K562 (cell line): ENCODE measurements at regions of chr7 and their contacts with region 1.

Region 1: DNA sequence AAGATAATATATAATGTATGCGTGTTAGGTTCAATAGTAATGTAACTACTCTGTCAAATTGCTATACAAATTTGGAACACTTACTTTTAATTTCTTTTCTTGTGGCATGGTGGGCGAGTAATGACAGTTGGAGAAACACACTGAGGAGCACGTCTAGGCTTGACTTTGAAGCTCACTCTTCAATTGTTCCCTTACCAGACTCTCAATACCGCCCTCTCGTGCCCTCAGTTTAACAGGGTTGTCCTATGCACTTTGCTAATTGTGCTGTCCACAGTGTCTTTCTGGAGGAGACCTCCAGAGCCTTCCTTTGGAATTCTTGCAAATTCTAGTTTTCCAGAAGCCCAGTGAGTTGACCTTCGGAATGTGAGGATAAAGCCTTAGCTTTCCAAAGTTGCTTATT is 107.2 kb upstream of the RELN start:
- DNase-seq: peak in 3 of 4 experiments; percentile 41 to 86 (median 72)
- ATAC-seq: peak; percentile 93
- H3K4me3 ChIP-seq: no peak overlapping the region
- H3K27ac ChIP-seq: no peak overlapping the region
- H3K4me1 ChIP-seq: peaks cover 5 to 17% of the 10 kb centered on the region in 2 experiments; a peak in 4 of 5 replicates
- H3K27me3 ChIP-seq: no peaks in the 10 kb centered on the region
- CTCF ChIP-seq: peak; percentile 74 to 76 (median 75)
- EP300 ChIP-seq: no peak
- POLR2A ChIP-seq: no peak
- RAD21 ChIP-seq: peak; percentile 81 to 87

Region 2: GRCh38 chr7:103524042-103524907 is 572.4 kb before region 1 on chr7:
- CTCF ChIA-PET with region 1: interaction called, 3 read pairs
- POLR2A ChIA-PET with region 1: no interaction called
- in situ Hi-C with region 1: no loop called
- intact Hi-C with region 1: loop called (anchors 1 kb)
- DNase-seq: peak; percentile 29 to 67 (median 46)
- ATAC-seq: peak; percentile 93
- H3K4me3 ChIP-seq: no peak overlapping the region
- H3K27ac ChIP-seq: no peak overlapping the region
- H3K4me1 ChIP-seq: peaks cover 0 to 3% of the 10 kb centered on the region in 2 experiments; a peak in 2 of 5 replicates
- H3K27me3 ChIP-seq: no peaks in the 10 kb centered on the region; a peak in 1 of 5 replicates
- CTCF ChIP-seq: peak; percentile 69 to 84 (median 74)
- EP300 ChIP-seq: no peak
- POLR2A ChIP-seq: no peak
- RAD21 ChIP-seq: peak; percentile 95 to 96

Region 3: GRCh38 chr7:103660455-103661371 is 436.0 kb before region 1 on chr7:
- CTCF ChIA-PET with region 1: no interaction called
- POLR2A ChIA-PET with region 1: no interaction called
- in situ Hi-C with region 1: no loop called
- intact Hi-C with region 1: loop called (anchors 10 kb)
- DNase-seq: peak in 2 of 4 experiments; percentile 32 to 72
- ATAC-seq: peak; percentile 57
- H3K4me3 ChIP-seq: no peak overlapping the region
- H3K27ac ChIP-seq: peak overlapping the region; percentile 71
- H3K4me1 ChIP-seq: peaks cover 10 to 53% of the 10 kb centered on the region in 2 experiments
- H3K27me3 ChIP-seq: no peaks in the 10 kb centered on the region
- CTCF ChIP-seq: no peak
- EP300 ChIP-seq: peak; percentile 82
- POLR2A ChIP-seq: no peak
- RAD21 ChIP-seq: 0 out of 4 replicates have a peak, but pooled peaks of 1 of the 2 experiments have one; percentile 2

Region 4: GRCh38 chr7:103887855-103888602 is 208.7 kb before region 1 on chr7:
- CTCF ChIA-PET with region 1: no interaction called
- POLR2A ChIA-PET with region 1: no interaction called
- in situ Hi-C with region 1: no loop called
- intact Hi-C with region 1: loop called (anchors 10 kb)
- DNase-seq: peak; percentile 27 to 68 (median 55)
- ATAC-seq: peak; percentile 95
- H3K4me3 ChIP-seq: no peak overlapping the region
- H3K27ac ChIP-seq: peak overlapping the region; percentile 11; the same call in 1 of the 3 replicates
- H3K4me1 ChIP-seq: peaks cover 4 to 23% of the 10 kb centered on the region in 2 experiments; a peak in 3 of 5 replicates
- H3K27me3 ChIP-seq: no peaks in the 10 kb centered on the region
- CTCF ChIP-seq: peak; percentile 55 to 65 (median 57)
- EP300 ChIP-seq: no peak
- POLR2A ChIP-seq: no peak
- RAD21 ChIP-seq: peak in 1 of 2 experiments; percentile 50; a peak in 2 of 4 replicates

Region 5: GRCh38 chr7:103989785-103990767 is 106.6 kb before region 1 on chr7:
- CTCF ChIA-PET with region 1: no interaction called
- POLR2A ChIA-PET with region 1: no interaction called
- in situ Hi-C with region 1: no loop called
- intact Hi-C with region 1: loop called (anchors 1 kb)
- DNase-seq: peak; percentile 71 to 82 (median 74)
- ATAC-seq: peak; percentile 71
- H3K4me3 ChIP-seq: peak overlapping the region; percentile 62
- H3K27ac ChIP-seq: peak overlapping the region; percentile 74
- H3K4me1 ChIP-seq: peaks cover 27 to 36% of the 10 kb centered on the region in 2 experiments
- H3K27me3 ChIP-seq: no peaks in the 10 kb centered on the region
- CTCF ChIP-seq: peak in 2 of 3 experiments; percentile 31 to 69; a peak in 4 of 6 replicates
- EP300 ChIP-seq: no peak
- POLR2A ChIP-seq: peak; percentile 59; the same call in 1 of the 2 replicates
- RAD21 ChIP-seq: peak in 1 of 2 experiments; percentile 24; a peak in 2 of 4 replicates